A549 (cell line): ENCODE measurements at regions of chr10 and their contacts with region 1.

Region 1: DNA sequence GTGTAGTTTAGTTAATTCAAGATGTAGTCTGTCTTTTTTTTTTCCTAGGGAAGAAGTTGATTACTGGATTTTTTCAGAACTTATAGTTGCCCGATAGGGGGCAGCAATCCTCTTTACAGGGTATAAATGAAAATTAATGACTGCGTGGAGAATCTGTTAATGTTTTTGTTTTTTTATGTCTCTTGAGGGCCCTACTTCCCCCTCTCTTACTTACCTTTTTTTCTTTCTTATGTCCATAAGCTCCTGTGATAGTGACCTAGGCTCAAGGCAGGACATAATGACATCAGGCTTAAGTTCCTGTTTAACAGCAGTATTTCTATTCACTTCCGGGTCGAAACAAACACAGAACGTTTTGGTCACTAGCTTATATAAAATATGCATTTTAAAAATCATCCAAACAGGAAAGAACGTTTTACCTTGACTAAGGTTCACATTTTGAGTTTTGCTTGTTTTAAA is 18.8 kb downstream of the CDC123 start:
- DNase-seq: peak; percentile 40 to 50
- ATAC-seq: peak in 1 of 2 experiments; percentile 47; a peak in 3 of 6 replicates
- H3K4me3 ChIP-seq: no peak overlapping the region
- H3K27ac ChIP-seq: peak overlapping the region in 1 of 2 experiments; percentile 39; a peak in 2 of 6 replicates
- H3K4me1 ChIP-seq: peaks cover 4% of the 10 kb centered on the region; the same call in 2 of the 3 replicates
- CTCF ChIP-seq: peak; percentile 83
- EP300 ChIP-seq: no peak
- POLR2A ChIP-seq: no peak
- RAD21 ChIP-seq: peak; percentile 56 to 65

Region 2: DNA sequence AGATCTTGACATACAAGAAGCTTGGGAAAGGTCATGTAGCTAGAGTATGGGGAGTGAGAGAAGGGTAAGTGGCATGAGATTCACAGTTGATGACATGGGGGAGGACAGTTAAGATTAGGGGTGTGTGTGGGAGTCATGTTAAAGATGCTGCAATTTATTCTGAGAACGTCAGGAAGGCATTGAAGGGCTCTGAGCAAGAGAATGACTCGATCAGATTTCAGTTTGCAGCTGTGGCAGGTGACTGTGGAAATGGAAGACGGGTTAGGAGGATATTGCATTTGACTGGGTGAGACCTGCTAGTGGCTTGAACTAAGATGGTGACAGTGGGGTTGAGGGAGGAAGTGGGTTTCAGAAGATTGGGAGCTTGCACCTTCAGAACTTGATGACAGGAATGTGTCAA is 13.2 kb before region 1 on chr10:
- CTCF ChIA-PET with region 1: interaction called, 61 read pairs
- POLR2A ChIA-PET with region 1: interaction called, 3 read pairs
- DNase-seq: no peak
- ATAC-seq: no peak
- H3K4me3 ChIP-seq: no peak overlapping the region
- H3K27ac ChIP-seq: no peak overlapping the region
- H3K4me1 ChIP-seq: peaks cover 12% of the 10 kb centered on the region
- CTCF ChIP-seq: no peak
- EP300 ChIP-seq: no peak
- POLR2A ChIP-seq: no peak
- RAD21 ChIP-seq: no peak

Region 3: DNA sequence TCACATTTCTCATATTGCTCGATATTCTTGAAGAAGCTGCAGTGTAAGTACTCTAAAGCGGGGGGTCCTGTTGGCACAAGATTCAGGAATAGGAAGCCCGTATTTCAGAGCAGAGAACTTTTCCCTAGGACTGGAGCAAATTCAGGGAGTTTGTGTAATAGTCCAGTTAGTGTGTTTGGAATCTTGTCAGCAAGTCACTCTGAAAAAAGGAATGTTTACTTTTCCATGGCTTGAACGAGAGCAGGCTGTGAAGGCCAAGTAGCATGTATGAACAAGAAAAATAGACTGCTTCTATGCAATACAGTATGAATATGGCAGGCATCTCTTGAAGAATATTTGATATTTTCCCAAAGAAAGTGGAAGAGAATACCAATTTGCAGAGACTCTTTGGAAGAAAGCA is 21.0 kb after region 1 on chr10:
- CTCF ChIA-PET with region 1: interaction called, 15 read pairs
- POLR2A ChIA-PET with region 1: no interaction called
- DNase-seq: no peak
- ATAC-seq: no peak
- H3K4me3 ChIP-seq: no peak overlapping the region
- H3K27ac ChIP-seq: no peak overlapping the region
- H3K4me1 ChIP-seq: no peaks in the 10 kb centered on the region; the same call in 2 of the 3 replicates
- CTCF ChIP-seq: no peak
- EP300 ChIP-seq: no peak
- POLR2A ChIP-seq: no peak
- RAD21 ChIP-seq: no peak

Region 4: DNA sequence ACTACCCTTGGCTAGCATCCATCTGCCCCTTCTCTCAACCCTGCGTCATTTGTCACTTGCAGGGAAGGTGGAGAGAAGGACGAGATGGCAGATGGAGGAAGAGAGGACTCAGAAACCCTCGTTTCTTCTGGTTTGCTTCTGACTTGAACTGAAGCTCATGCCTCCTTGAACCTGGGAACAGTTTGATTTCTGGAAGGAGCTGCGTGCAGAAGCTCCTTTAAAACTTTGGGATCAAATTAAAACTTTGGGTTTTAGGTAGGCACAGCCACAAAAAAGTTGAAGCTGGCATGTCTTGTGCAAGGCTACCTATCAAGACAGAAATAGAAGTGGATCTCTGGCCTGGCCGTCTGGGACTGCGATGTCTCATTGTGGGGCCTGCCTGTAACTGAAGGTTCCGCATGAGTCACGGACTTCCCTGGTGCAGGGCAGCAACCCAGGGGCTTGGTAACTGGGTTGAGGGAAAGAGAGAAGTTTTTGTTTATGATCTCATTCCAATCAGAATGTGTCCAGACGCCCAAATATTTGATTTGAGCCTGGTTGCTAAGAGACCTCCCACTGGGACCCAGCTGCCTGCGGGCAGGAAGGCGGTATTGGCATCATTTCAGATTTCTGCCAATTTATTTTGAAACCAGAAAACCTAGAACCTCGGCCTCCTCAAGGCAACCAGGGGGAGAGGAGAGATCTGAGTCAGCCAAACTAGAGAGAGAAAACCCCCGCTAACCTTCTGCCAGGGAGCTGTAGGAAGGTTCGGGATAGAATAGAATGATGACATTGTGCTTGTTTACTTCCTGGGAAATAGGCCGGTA is 118.8 kb after region 1 on chr10:
- CTCF ChIA-PET with region 1: no interaction called
- POLR2A ChIA-PET with region 1: no interaction called
- DNase-seq: peak; percentile 98
- ATAC-seq: peak; percentile 98 to 99
- H3K4me3 ChIP-seq: peak overlapping the region; percentile 12; the same call in 1 of the 3 replicates
- H3K27ac ChIP-seq: peak overlapping the region; percentile 91 to 93
- H3K4me1 ChIP-seq: peaks cover 45% of the 10 kb centered on the region
- CTCF ChIP-seq: no peak
- EP300 ChIP-seq: peak; percentile 87 to 89
- POLR2A ChIP-seq: no peak
- RAD21 ChIP-seq: peak; percentile 2 to 57; a peak in 4 of 5 replicates

Region 5: DNA sequence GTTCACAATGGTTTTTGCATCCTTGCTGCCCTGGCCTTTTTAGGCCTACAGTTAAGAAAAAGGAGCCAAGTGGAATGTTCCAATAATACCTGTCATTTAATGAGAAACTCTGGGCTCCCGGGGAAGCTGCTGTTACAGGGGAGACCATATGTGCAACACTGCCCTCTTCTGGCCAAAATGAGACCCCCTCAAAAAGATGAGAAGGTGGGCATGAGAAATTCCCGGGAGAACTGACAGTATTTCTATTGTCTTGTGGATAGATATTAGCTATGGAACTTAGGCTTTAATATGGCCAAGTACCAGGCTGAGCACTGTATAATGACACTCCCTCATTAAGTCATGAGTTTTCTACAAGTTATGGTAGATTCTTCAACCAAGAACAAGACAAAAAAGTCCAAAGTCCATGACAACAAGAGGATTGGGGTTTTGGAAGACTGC is 687.4 kb after region 1 on chr10:
- CTCF ChIA-PET with region 1: interaction called, 16 read pairs
- POLR2A ChIA-PET with region 1: no interaction called
- DNase-seq: peak; percentile 61 to 63
- ATAC-seq: peak; percentile 56 to 76; a peak in 3 of 6 replicates
- H3K4me3 ChIP-seq: no peak overlapping the region
- H3K27ac ChIP-seq: no peak overlapping the region
- H3K4me1 ChIP-seq: no peaks in the 10 kb centered on the region
- CTCF ChIP-seq: peak; percentile 80
- EP300 ChIP-seq: no peak
- POLR2A ChIP-seq: no peak
- RAD21 ChIP-seq: peak; percentile 81 to 82